HEK293T (cell line): ENCODE measurements at regions of chr4 and their contacts with region 1.

Region 1: GRCh38 chr4:7067452-7068278 is at the start of gene GRPEL1:
- DNase-seq: peak; percentile 98

Region 2: DNA sequence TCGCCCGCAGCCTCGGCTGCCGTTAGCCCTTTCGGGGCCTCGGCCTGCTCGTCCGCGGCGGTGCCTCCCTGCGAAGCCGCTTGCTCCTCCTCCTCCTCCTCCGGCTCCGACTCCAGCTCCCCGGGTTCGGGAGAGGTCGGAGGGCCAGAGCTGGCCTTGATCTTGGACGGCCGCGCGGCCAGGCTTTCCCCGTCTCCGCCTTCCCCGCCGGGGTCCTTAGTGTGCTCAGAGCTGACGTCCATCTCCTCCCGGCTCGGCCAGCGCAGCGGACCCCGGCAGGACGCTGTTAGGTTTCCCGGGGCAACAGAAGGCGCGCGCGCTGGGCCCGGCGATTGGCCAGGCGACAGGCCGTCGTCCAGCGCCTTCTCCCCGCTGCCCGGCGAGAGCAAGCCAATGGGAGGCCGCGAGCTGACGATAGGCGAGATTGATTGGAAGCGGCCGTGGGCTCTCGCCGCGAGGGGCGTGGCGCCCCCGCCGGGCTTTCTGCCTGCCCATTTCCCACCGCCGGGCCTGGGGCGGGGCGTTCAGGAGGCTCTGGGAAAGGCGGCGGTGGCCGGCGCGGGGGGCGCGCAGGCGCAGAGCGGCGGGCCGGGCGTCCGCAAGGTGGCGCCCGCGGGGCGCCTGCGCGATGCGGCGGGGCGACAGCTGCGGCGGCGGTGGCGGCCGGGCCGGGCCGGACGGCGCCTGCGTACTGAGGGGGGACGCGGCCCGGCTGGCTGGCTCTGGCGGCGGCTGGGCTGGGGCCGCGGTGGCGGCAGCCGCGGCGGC is 24.8 kb before region 1 on chr4 and contains the start of gene TADA2B:
- CTCF ChIA-PET with region 1: interaction called, 14 read pairs
- POLR2A ChIA-PET with region 1: interaction called, 67 read pairs
- DNase-seq: peak; percentile 100

Region 3: DNA sequence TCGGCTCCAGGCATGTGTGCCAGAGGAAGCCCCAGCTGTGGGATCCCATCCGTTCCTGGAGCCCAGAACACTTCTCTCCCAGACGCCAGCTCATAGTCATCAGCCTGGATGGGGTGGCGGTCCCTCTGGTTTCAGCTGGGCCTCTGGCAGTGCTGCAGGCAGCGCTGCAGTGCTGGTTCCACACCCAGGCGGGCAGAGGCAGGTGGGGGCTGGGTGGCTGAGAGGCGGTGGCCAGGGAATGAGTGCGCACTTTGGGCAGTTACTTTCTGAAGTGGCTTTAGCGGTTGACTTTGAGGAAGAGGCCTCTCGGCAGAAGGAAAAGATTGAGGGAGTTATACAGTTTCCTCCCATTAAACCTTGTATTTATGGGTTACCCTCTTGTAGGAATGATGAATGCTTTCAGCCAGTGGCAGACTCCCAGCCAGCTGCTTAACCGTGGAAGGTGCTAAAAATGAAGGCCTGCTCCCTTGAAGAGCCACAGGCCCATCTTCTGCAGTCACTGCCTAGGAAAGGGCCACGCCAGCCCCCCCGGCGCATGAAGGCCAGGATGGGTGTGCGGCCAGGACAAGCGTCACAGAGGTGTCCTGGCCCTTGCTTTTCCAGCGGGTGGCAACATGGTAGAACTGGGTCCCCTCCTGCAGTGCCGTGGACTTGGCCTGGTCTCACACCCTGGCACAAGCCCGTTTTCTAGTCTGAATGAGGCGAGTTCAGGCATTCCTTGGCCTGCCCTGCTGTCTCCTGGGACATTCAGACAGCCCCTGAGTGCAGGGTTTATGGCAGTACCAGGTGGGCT is 14.5 kb before region 1 on chr4:
- CTCF ChIA-PET with region 1: interaction called, 3 read pairs
- POLR2A ChIA-PET with region 1: interaction called, 39 read pairs
- DNase-seq: no peak

Region 4: GRCh38 chr4:7081891-7082471 is 14.3 kb after region 1 on chr4:
- CTCF ChIA-PET with region 1: interaction called, 15 read pairs
- POLR2A ChIA-PET with region 1: interaction called, 18 read pairs
- DNase-seq: peak; percentile 76

Region 5: DNA sequence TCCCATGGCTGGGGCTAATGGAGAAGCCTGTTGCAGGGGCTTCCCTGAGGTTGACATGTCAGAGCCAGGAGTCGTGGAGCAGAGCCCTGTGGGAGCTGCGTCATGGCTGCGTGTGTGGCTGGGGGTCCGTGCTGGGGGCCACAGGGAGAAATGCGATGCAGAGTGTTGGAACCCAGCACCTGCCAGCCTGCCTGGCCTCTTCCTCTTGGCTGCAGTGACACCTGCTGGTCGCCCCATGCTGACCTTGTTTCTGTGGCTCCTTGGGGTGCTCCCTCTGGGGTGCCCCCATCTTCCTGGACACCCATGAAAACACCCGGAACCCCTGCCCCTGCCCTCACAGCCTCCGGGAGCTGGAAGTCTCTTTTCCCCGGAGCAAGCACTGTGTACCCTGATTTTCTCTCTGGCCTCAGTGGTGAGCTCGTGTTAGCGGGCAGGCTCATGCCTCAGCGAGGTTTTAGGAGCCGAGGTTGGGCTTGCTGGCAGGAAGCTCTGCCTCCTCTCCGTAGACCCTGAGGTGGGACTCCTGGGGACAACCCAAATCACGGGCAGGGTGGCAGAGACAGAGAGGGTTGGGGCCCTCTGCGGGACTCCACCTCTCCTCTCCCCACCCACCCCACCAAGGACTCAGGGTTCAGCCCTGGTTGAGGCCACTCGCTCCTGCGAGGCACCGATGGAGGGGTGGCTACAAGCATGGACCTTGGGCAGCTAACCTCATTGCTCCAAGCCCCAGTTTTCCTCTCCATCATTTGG is 228.4 kb after region 1 on chr4:
- CTCF ChIA-PET with region 1: no interaction called
- POLR2A ChIA-PET with region 1: no interaction called
- DNase-seq: peak; percentile 32